ENCODE measurements at regions of chr6 and their contacts with region 1.

Region 1: GRCh38 chr6:158686791-158687381 is 37.0 kb downstream of the SYTL3 start:
- DNase-seq: no peak
- ATAC-seq: peak; percentile 79
- H3K4me3 Mint-ChIP-seq: no peak overlapping the region
- H3K27ac Mint-ChIP-seq: peak overlapping the region; percentile 72
- H3K4me1 Mint-ChIP-seq: peaks cover 48% of the 10 kb centered on the region
- H3K27me3 Mint-ChIP-seq: no peaks in the 10 kb centered on the region

Region 2: DNA sequence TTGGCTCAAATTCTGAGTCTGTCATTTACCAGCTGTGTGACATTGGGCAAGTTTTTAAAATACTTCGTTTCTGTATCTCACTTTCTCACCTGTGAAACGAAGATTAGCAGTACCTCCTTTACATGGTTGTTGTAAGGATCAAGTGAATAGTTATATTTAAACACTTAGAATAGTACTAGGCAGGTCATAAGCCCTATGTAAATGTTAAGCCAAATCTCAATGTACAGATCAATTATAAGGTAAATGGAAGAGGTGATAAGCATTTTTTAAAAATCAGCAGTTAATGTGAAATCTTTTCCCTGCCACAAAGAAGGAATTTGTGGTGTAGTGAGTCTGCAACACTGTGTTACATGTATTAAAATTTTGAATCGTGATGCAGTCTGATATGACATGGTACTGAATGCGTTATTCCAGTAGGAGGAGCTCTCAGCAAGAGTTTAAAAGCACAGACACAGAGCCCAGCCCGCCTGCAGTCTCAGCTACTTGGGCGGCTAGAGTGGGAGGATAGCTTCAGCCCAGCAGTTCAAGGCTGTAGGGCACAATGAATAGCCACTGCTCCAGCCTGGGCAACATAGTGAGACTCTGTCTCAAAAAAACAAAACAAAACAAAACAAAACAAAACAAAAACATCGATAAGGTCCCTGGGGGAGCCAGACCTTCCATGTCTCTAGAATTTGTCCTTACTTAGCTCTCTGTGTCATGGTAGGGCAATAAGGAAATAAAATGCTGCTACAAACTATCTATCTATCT is 472.8 kb before region 1 on chr6:
- CTCF ChIA-PET with region 1: interaction called, 8 read pairs
- POLR2A ChIA-PET with region 1: no interaction called
- intact Hi-C with region 1: loop called in 1 of 2 experiments (anchors 1 kb)
- DNase-seq: peak; percentile 75
- ATAC-seq: peak; percentile 97
- H3K4me3 Mint-ChIP-seq: no peak overlapping the region
- H3K27ac Mint-ChIP-seq: no peak overlapping the region
- H3K4me1 Mint-ChIP-seq: peaks cover 10% of the 10 kb centered on the region
- H3K27me3 Mint-ChIP-seq: no peaks in the 10 kb centered on the region

Region 3: GRCh38 chr6:158220786-158221442 is 466.0 kb before region 1 on chr6:
- CTCF ChIA-PET with region 1: interaction called, 5 read pairs
- POLR2A ChIA-PET with region 1: interaction called, 3 read pairs
- intact Hi-C with region 1: loop called in 1 of 2 experiments (anchors 1 kb)
- DNase-seq: peak; percentile 86
- ATAC-seq: peak; percentile 97
- H3K4me3 Mint-ChIP-seq: no peak overlapping the region
- H3K27ac Mint-ChIP-seq: no peak overlapping the region
- H3K4me1 Mint-ChIP-seq: peaks cover 4% of the 10 kb centered on the region
- H3K27me3 Mint-ChIP-seq: peaks cover 1% of the 10 kb centered on the region

Region 4: GRCh38 chr6:158629367-158630221 is 57.3 kb before region 1 on chr6:
- CTCF ChIA-PET with region 1: interaction called, 9 read pairs
- POLR2A ChIA-PET with region 1: no interaction called
- intact Hi-C with region 1: loop called in 1 of 2 experiments (anchors 2 kb)
- DNase-seq: peak; percentile 62
- ATAC-seq: peak; percentile 77
- H3K4me3 Mint-ChIP-seq: no peak overlapping the region
- H3K27ac Mint-ChIP-seq: peak overlapping the region; percentile 69
- H3K4me1 Mint-ChIP-seq: peaks cover 38% of the 10 kb centered on the region
- H3K27me3 Mint-ChIP-seq: no peaks in the 10 kb centered on the region

Region 5: GRCh38 chr6:158660333-158660754 is 26.5 kb before region 1 on chr6:
- CTCF ChIA-PET with region 1: interaction called, 26 read pairs
- POLR2A ChIA-PET with region 1: no interaction called
- intact Hi-C with region 1: no loop called
- DNase-seq: peak; percentile 61
- ATAC-seq: peak; percentile 65
- H3K4me3 Mint-ChIP-seq: no peak overlapping the region
- H3K27ac Mint-ChIP-seq: no peak overlapping the region
- H3K4me1 Mint-ChIP-seq: peaks cover 53% of the 10 kb centered on the region
- H3K27me3 Mint-ChIP-seq: no peaks in the 10 kb centered on the region

Region 6: DNA sequence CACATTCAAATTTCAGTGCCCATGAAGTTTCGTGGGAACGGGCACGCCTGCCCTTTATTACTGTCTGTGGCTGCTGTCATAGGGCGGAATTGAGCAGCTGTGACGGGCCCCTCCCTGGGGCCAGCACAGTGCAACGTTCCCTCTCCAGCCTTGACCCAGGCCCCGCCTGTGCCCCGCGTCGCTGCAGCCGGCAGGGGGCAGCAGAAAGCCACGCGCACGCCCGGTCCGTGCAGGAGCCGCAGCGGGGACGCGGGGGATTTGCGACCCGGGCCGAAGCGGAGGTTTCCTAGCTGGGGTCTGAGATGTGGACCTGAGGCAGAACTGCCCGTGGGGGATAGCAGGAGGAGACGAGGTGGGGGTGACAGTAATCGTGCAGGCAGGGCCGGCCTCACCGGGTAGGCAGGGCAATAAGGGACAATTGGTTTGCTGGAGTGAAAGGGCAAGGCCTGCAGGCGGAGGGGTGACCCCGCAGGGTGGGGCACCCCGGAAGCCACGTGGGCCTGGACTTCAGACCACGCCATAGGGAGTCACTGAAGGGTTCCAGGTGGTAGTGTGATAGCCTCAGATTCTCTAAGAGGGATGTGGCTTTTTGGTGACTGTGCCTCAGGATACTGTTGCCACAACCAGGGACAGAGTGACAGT is 17.4 kb after region 1 on chr6:
- CTCF ChIA-PET with region 1: interaction called, 11 read pairs
- POLR2A ChIA-PET with region 1: no interaction called
- intact Hi-C with region 1: no loop called
- DNase-seq: peak; percentile 87
- ATAC-seq: peak; percentile 93
- H3K4me3 Mint-ChIP-seq: peak overlapping the region; percentile 45
- H3K27ac Mint-ChIP-seq: no peak overlapping the region
- H3K4me1 Mint-ChIP-seq: peaks cover 13% of the 10 kb centered on the region
- H3K27me3 Mint-ChIP-seq: no peaks in the 10 kb centered on the region

Region 7: DNA sequence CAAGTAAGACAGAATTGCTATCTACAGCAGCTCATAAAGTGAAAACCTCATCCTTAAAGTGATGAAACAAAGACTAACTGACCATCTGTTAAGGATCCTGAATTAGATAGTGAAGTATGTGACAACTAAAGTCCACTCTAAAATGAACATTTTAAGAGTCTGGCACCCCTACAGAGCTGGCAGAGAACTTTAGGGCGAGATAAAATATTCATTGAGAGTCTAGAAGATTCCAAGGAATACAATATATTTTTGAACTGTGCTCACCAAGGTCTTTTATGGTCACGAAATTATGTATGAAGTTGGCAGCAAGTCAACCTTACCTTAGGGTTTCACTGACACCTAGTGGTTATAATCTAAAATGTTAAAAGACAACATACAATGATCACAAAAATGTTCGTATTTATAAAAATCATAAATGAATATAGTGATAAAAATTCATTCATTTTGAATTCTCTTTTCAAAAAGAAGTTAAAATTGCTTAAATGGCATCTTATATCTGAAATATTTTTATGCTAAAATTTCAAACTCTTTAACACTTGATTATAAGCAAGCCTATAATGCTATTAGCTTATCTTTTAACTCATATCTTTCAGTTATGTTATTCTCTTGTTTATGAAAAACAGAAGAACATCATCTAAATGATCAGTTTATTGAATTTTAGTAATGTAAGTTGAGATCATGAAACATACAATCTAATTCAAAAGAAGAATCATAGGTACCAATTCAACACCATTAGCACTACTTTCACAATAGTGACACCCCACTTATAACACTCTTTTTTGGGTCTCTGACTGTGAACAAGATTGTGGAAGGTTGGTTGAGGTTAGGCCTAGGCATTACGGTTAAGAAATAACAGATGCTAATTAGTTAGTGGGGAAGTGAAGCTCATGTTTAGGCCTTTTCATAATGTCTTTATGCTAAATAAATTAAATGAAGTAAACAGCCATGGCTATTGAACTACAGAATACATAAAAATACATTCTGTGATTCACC is 285.7 kb after region 1 on chr6:
- CTCF ChIA-PET with region 1: interaction called, 14 read pairs
- POLR2A ChIA-PET with region 1: no interaction called
- intact Hi-C with region 1: no loop called
- DNase-seq: no peak
- ATAC-seq: peak; percentile 51
- H3K4me3 Mint-ChIP-seq: no peak overlapping the region
- H3K27ac Mint-ChIP-seq: no peak overlapping the region
- H3K4me1 Mint-ChIP-seq: no peaks in the 10 kb centered on the region
- H3K27me3 Mint-ChIP-seq: no peaks in the 10 kb centered on the region